ENCODE measurements at regions of chr7 and their contacts with region 1.

Region 1: GRCh38 chr7:68407460-68407859 is 1190.8 kb upstream of the AUTS2 start:
- DNase-seq: no peak
- ATAC-seq: no peak
- H3K4me3 ChIP-seq: no peak overlapping the region
- H3K27ac ChIP-seq: no peak overlapping the region
- H3K4me1 ChIP-seq: no peaks in the 10 kb centered on the region
- H3K27me3 ChIP-seq: no peaks in the 10 kb centered on the region
- CTCF ChIP-seq: no peak
- POLR2A ChIP-seq: no peak
- RAD21 ChIP-seq: no peak

Region 2: DNA sequence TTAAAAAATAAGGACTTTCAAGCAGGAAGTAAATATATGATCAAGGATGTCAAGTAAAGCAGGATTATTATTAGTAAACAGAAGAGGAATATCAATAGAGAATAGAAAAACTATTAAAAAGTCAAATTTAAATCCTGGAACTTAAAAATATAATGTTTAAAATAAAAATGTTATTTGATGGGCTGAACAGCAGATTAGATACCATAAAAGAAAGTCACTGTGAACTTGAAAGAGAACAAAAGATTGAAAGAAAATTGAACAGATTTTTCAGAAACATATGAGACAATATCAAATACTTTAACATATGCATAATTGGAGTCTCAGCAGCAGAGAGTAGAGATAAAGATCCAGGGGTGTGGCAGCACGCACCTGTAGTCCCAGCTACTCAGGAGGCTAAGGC is 22.9 kb before region 1 on chr7:
- CTCF ChIA-PET with region 1: no interaction called
- POLR2A ChIA-PET with region 1: no interaction called
- RAD21 ChIA-PET with region 1: no interaction called
- intact Hi-C with region 1: loop called (anchors 1 kb)
- DNase-seq: no peak
- ATAC-seq: no peak
- H3K4me3 ChIP-seq: no peak overlapping the region
- H3K27ac ChIP-seq: no peak overlapping the region
- H3K4me1 ChIP-seq: no peaks in the 10 kb centered on the region
- H3K27me3 ChIP-seq: no peaks in the 10 kb centered on the region
- CTCF ChIP-seq: no peak
- POLR2A ChIP-seq: no peak
- RAD21 ChIP-seq: no peak

Region 3: GRCh38 chr7:68730951-68731350 is 323.5 kb after region 1 on chr7:
- CTCF ChIA-PET with region 1: no interaction called
- POLR2A ChIA-PET with region 1: no interaction called
- RAD21 ChIA-PET with region 1: no interaction called
- intact Hi-C with region 1: no loop called
- DNase-seq: no peak
- ATAC-seq: no peak
- H3K4me3 ChIP-seq: no peak overlapping the region
- H3K27ac ChIP-seq: no peak overlapping the region
- H3K4me1 ChIP-seq: no peaks in the 10 kb centered on the region
- H3K27me3 ChIP-seq: no peaks in the 10 kb centered on the region
- CTCF ChIP-seq: no peak
- POLR2A ChIP-seq: no peak
- RAD21 ChIP-seq: no peak

Region 4: GRCh38 chr7:69025249-69025648 is 617.8 kb after region 1 on chr7:
- CTCF ChIA-PET with region 1: no interaction called
- POLR2A ChIA-PET with region 1: no interaction called
- RAD21 ChIA-PET with region 1: no interaction called
- intact Hi-C with region 1: no loop called
- DNase-seq: no peak
- ATAC-seq: no peak
- H3K4me3 ChIP-seq: no peak overlapping the region
- H3K27ac ChIP-seq: no peak overlapping the region
- H3K4me1 ChIP-seq: no peaks in the 10 kb centered on the region
- H3K27me3 ChIP-seq: no peaks in the 10 kb centered on the region
- CTCF ChIP-seq: no peak
- POLR2A ChIP-seq: no peak
- RAD21 ChIP-seq: no peak

Measured in HCT116 (cell line).